Activated CD4-positive, alpha-beta memory T cell treated with anti-CD3 and anti-CD28 coated beads, Interleukin-2, amount 10 ng/mL, durations not matched to agents 7 days and 5 days (primary cell): ENCODE measurements at regions of chr2 and their contacts with region 1.

Region 1: GRCh38 chr2:135876066-135876711 is at the start of gene MCM6:
- DNase-seq: peak; percentile 99
- H3K4me3 Mint-ChIP-seq: peak within 1 kb of the TSS; percentile 83
- H3K27ac Mint-ChIP-seq: peak within 1 kb of the TSS; percentile 93
- H3K4me1 Mint-ChIP-seq: peaks cover 42% of the 10 kb centered on the region
- H3K27me3 Mint-ChIP-seq: no peaks in the 10 kb centered on the region
- total RNA-seq, gene MCM6: 128 to 130 TPM

Region 2: GRCh38 chr2:135451966-135452365 is 424.2 kb before region 1 on chr2:
- CTCF ChIA-PET with region 1: no interaction called
- POLR2A ChIA-PET with region 1: no interaction called
- DNase-seq: no peak
- H3K4me3 Mint-ChIP-seq: no peak overlapping the region
- H3K27ac Mint-ChIP-seq: no peak overlapping the region
- H3K4me1 Mint-ChIP-seq: no peaks in the 10 kb centered on the region
- H3K27me3 Mint-ChIP-seq: no peaks in the 10 kb centered on the region

Region 3: GRCh38 chr2:135741395-135742324 is 134.5 kb before region 1 on chr2 and contains the start of gene UBXN4:
- CTCF ChIA-PET with region 1: no interaction called
- POLR2A ChIA-PET with region 1: interaction called, 13 read pairs
- DNase-seq: peak; percentile 97
- H3K4me3 Mint-ChIP-seq: peak within 1 kb of the TSS; percentile 98
- H3K27ac Mint-ChIP-seq: peak within 1 kb of the TSS; percentile 100
- H3K4me1 Mint-ChIP-seq: peaks cover 34% of the 10 kb centered on the region
- H3K27me3 Mint-ChIP-seq: no peaks in the 10 kb centered on the region
- total RNA-seq, gene UBXN4: 118 to 126 TPM

Region 4: DNA sequence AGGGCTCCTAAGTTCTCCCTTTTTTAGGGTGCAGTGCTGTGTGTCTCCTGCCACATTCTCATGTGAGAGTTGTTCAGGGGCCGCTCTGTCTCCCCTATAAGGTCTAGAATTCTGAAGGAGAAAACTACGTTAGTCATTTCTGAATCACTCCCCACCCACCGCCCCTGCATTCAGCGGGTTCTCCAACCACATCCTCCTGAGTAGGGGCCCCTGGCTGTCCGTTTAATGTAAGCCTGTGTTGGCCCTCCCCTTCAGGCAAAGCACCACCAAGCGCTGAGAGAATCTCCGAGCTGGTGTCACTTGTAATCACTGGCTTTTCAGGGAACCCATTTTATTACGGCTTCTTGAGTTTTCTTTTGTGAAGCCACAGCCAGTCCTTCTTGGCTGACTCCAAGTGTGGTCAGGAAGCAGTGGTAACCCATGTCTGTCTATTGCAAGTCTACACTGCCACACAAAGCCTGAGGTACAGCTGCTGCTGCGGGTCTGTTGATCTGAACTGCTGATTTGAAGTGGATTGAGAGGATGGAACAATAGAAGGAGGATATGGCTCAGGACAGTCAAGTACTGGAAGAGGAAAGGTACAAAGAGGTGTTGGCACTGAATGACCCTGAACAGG is 56.1 kb before region 1 on chr2:
- CTCF ChIA-PET with region 1: interaction called, 3 read pairs
- POLR2A ChIA-PET with region 1: interaction called, 19 read pairs
- DNase-seq: peak; percentile 87
- H3K4me3 Mint-ChIP-seq: peak overlapping the region; percentile 48
- H3K27ac Mint-ChIP-seq: peak overlapping the region; percentile 78
- H3K4me1 Mint-ChIP-seq: peaks cover 35% of the 10 kb centered on the region
- H3K27me3 Mint-ChIP-seq: peaks cover 2% of the 10 kb centered on the region

Region 5: GRCh38 chr2:135936524-135936923 is 60.3 kb after region 1 on chr2:
- CTCF ChIA-PET with region 1: no interaction called
- POLR2A ChIA-PET with region 1: no interaction called
- DNase-seq: no peak
- H3K4me3 Mint-ChIP-seq: no peak overlapping the region
- H3K27ac Mint-ChIP-seq: peak overlapping the region; percentile 32
- H3K4me1 Mint-ChIP-seq: peaks cover 51% of the 10 kb centered on the region
- H3K27me3 Mint-ChIP-seq: no peaks in the 10 kb centered on the region

Region 6: DNA sequence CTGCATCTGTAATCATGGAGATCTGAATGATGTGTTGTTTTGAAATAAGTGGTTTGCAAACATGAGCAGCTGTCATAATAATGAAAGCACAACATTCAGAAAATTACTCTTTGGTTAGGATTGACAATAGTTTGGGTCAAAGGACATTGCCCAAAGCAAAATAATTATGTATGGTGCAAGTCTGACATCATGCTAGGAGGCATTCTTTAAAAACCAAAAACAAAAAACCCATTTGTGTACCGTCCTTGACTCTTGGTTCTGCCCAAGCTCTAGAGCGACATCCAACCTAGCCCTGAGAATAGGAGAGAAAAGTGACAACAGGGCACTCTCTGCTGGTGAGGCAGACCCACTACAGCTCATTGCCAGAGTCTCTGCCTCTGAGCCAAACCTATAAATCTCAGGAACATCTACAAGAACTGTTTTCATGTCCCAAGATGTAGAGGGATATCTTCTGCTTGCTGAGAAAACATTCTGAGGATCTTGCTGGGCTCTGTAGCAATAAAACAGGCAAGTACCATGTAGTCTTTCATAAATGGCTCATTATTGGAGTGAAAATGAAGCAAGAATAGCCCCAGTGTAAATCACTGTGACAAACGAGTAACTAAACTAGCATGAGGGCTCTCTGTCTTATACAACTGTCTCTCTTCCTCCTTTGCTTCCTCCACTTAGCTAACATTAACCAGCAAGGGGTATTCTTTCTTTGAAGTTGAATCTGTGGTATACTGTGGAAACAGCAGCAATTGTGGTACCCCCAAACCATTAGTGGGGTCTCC is 508.5 kb after region 1 on chr2:
- CTCF ChIA-PET with region 1: interaction called, 23 read pairs
- POLR2A ChIA-PET with region 1: interaction called, 27 read pairs
- DNase-seq: peak; percentile 64
- H3K4me3 Mint-ChIP-seq: peak overlapping the region; percentile 11
- H3K27ac Mint-ChIP-seq: peak overlapping the region; percentile 91
- H3K4me1 Mint-ChIP-seq: peaks cover 45% of the 10 kb centered on the region
- H3K27me3 Mint-ChIP-seq: no peaks in the 10 kb centered on the region